ENCODE measurements at regions of chr3 and their contacts with region 1.

Region 1: DNA sequence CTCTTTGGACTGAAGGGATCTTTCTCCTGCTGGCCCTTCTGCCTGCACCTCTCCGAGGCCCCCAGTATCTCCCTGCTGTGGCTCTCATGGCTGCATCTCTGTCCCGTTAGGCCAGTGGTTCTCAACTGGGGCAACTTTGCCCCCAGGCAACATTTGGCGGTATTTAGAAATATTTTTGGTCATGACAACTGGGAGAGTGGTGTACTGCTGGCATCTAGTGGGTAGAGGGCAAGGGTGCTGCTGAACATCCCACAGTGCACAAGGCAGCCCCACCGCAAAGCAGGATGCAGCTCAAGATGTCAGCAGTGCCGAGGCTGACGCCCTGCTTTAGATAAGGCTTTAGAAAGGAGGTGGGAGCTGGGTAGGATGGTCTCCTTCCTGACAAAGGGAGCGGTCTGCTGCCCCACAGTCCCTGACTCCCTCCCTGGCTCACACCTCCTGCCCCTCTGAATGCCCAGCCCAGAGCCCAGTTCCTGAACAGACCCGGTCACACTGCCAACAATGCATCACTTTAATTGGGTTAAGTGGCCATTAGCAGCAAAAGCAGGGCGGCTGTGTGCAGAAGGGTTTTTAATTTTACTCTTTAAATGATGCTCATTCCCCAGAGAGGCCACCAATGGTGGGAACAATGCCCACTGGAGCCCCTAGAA is 68.8 kb upstream of the TMEM115 start:
- DNase-seq: peak; percentile 30
- H3K4me3 ChIP-seq: no peak overlapping the region
- H3K27ac ChIP-seq: no peak overlapping the region
- H3K4me1 ChIP-seq: no peaks in the 10 kb centered on the region
- H3K27me3 ChIP-seq: no peaks in the 10 kb centered on the region
- CTCF ChIP-seq: peak; percentile 33 to 54

Region 2: DNA sequence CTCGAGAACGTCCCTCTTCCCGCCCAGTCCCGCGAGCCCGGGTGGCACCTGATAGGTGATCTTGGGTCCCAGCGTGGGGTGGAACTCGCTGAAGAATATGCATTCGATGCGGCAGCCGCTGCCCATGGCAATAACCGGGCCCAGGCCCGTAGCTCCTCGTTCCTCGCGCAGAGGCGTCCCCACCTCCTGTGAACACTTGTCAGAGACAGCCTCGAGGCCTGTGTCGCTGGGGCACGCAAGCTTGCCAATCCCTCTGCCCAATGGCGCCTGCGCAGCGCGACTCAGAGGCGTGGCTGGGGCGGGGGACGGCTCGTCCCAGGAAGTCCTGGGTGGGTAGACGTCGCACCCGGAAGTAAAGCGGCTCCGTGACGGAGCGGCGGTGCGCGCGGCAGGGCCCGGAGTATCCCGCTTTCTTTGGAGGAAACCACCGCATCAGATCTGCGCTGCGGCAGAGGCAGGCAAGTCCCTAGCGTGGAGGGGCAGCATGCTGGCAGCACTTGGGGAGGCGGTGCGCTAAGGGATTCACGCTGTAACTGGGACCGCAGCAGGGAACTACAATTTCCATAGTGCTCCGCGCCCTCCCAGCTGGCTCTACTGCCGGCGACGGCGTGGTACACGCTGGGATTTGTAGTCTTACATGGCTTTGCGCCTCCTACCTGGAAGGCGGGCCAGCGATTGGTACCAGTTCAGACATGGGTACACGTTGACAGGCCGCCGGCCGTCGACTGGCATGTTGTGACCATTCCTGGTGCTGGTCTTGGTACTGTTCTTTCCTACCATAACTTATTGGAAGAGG is 77.4 kb before region 1 on chr3 and contains the starts of genes CYB561D2 and NPRL2:
- CTCF ChIA-PET with region 1: no interaction called
- dilution Hi-C with region 1: no loop called
- in situ Hi-C with region 1: loop called in 1 of 2 experiments (anchors 10 kb)
- intact Hi-C with region 1: loop called (anchors 1 kb)
- DNase-seq: peak; percentile 94
- H3K4me3 ChIP-seq: peak within 1 kb of the TSS; percentile 58 to 88 (median 72)
- H3K27ac ChIP-seq: peak within 1 kb of the TSS; percentile 19
- H3K4me1 ChIP-seq: peaks cover 21% of the 10 kb centered on the region
- H3K27me3 ChIP-seq: no peaks in the 10 kb centered on the region
- CTCF ChIP-seq: no peak
- total RNA-seq, gene CYB561D2: 10.0 to 11.9 TPM
- total RNA-seq, gene NPRL2: 15.6 to 17.7 TPM

Region 3: GRCh38 chr3:50365080-50365841 is 62.8 kb before region 1 on chr3:
- CTCF ChIA-PET with region 1: interaction called, 3 read pairs
- dilution Hi-C with region 1: loop called (anchors 5 kb)
- in situ Hi-C with region 1: no loop called
- intact Hi-C with region 1: loop called (anchors 5 kb)
- DNase-seq: peak; percentile 85
- H3K4me3 ChIP-seq: peak overlapping the region; percentile 40 to 76 (median 62)
- H3K27ac ChIP-seq: no peak overlapping the region
- H3K4me1 ChIP-seq: peaks cover 14% of the 10 kb centered on the region
- H3K27me3 ChIP-seq: no peaks in the 10 kb centered on the region
- CTCF ChIP-seq: peak in 1 of 2 donors; percentile 25

Region 4: DNA sequence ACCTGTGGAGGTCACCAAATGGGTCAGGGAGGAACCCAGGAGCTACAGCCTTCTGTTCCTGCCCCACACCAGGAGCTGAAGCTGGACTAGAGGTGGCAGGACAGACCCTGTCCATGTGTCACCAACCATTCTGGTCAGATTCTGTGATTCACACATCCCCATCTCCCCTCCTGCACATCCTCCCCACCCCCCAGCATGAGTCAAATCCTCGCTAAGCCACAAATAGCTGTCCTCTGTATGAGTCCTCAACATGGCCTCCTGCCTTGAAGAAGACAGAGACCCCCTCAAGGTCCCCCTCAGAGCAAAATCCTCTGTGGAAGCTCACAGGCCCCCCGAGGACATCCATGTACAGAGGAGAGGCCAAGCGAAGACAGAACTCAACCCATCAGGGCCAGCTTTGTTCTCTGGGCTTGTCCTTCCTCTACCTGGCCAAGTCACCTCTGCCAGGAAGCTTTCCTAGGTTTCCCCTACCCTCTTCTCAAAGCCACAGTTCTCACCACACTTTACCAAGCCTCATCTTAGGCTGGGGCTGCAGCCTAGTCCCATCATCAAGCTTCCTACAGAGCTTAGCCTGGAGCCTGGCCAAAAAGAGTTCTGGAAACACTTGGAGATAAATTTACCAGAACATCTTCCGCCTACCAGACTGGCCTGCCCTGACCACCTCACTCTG is 58.2 kb after region 1 on chr3:
- CTCF ChIA-PET with region 1: no interaction called
- dilution Hi-C with region 1: loop called (anchors 5 kb)
- in situ Hi-C with region 1: no loop called
- intact Hi-C with region 1: no loop called
- DNase-seq: no peak
- H3K4me3 ChIP-seq: no peak overlapping the region
- H3K27ac ChIP-seq: no peak overlapping the region
- H3K4me1 ChIP-seq: no peaks in the 10 kb centered on the region
- H3K27me3 ChIP-seq: no peaks in the 10 kb centered on the region
- CTCF ChIP-seq: no peak

Region 5: GRCh38 chr3:50509715-50510114 is 81.6 kb after region 1 on chr3:
- CTCF ChIA-PET with region 1: no interaction called
- dilution Hi-C with region 1: loop called (anchors 5 kb)
- in situ Hi-C with region 1: no loop called
- intact Hi-C with region 1: no loop called
- DNase-seq: no peak
- H3K4me3 ChIP-seq: no peak overlapping the region
- H3K27ac ChIP-seq: no peak overlapping the region
- H3K4me1 ChIP-seq: no peaks in the 10 kb centered on the region
- H3K27me3 ChIP-seq: no peaks in the 10 kb centered on the region
- CTCF ChIP-seq: no peak

Region 6: DNA sequence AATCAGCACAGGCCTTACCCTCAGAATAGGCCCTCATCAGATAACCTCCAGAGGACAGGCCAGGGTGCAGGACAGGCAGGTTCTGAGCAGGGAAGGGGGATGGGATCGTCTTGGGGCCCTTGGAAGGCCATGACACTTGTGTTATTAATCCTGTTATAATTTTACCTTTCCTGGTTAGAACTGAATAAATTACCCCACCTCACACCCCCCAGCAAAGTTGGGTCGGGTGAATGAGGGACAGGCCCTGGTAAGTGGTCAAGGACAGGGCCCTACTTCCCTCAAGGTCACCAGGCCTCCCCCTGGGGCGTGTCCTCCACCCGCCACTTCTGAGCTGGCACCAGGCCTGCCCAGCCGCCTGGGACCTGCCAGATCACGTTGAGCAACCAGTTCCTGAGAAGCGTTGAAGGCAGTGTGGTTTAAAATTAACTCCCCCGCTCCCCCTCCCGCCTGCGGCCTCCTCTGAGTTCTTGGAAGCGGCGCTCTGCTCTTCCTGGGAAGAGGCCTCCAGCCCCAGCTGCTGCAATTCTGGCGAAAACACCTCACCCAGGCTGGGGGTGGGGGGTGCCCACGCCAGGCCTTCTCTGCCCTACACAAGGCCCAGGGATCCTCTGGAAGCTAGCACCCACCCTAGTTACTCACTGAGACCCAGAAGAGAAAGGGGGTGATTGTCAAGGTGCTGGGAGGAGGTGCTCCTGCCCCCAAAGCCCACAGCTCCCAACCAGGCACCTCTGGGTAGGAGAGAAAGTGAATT is 172.9 kb after region 1 on chr3:
- CTCF ChIA-PET with region 1: no interaction called
- dilution Hi-C with region 1: loop called (anchors 5 kb)
- in situ Hi-C with region 1: no loop called
- intact Hi-C with region 1: no loop called
- DNase-seq: peak; percentile 91
- H3K4me3 ChIP-seq: peak overlapping the region in 1 of 3 experiments; percentile 9
- H3K27ac ChIP-seq: peak overlapping the region; percentile 42
- H3K4me1 ChIP-seq: peaks cover 31% of the 10 kb centered on the region
- H3K27me3 ChIP-seq: no peaks in the 10 kb centered on the region
- CTCF ChIP-seq: no peak